Sigmoid colon (tissue), 7 donors: ENCODE measurements at regions of chr10 and their contacts with region 1.

Region 1: GRCh38 chr10:34739915-34740314 is 75.2 kb downstream of the PARD3 start:
- DNase-seq: peak; percentile 89
- H3K4me3 ChIP-seq: peak overlapping the region; percentile 4 to 23 (median 6)
- H3K27ac ChIP-seq: peak overlapping the region; percentile 69 to 83 (median 82)
- H3K4me1 ChIP-seq: peaks cover 0 to 87% (median 61%) of the 10 kb centered on the region in 4 donors
- H3K27me3 ChIP-seq: no peaks in the 10 kb centered on the region
- CTCF ChIP-seq: no peak
- EP300 ChIP-seq: no peak
- POLR2A ChIP-seq: no peak

Region 2: DNA sequence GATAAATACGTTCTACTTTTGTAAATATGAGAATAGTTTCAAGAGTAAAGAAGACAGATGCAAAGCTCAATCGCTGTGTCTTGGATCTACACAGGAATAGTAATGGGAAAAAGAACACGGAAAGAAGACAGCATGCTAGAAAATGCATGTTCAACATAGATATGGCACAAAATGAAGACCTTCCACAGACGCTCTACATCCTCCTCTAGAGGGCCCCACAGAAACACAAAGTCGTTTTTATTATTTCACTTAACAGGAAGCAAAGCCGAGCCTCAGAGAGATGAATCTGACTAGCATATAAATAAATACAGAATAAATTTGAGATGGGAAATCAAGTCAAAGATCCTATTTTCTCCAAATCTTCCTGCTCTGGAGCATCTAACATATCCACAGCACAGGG is 217.4 kb before region 1 on chr10:
- intact Hi-C with region 1: no loop called
- DNase-seq: no peak
- H3K4me3 ChIP-seq: no peak overlapping the region
- H3K27ac ChIP-seq: no peak overlapping the region
- H3K4me1 ChIP-seq: peaks cover 0 to 14% (median 13%) of the 10 kb centered on the region in 4 donors
- H3K27me3 ChIP-seq: no peaks in the 10 kb centered on the region
- CTCF ChIP-seq: no peak
- EP300 ChIP-seq: no peak
- POLR2A ChIP-seq: no peak

Region 3: DNA sequence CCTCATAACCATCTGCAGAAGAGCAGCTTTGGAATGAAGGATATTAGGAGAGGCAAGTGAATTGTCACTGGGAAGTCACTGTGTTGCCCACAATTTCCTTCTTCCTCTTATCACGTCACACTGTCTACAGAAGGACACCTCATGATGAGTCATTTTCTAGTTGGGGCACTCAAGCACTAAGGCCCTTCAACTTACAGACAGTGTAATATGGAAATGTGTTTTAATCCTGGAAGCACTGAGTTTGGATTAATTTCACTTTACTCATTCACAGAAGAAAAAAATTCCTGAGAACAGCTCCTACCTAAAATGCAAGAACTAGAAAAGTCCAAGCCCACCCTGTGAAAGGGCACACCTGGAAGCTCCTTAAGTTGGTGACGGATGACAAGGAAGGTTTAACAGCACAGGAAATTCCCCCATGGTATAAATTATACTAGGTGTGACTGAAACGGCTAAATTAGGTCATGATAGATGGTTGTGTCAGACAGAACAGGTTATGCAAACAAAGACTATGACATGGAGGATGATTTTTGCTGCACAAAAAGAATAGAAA is 18.6 kb after region 1 on chr10:
- intact Hi-C with region 1: loop called (anchors 2 kb)
- DNase-seq: no peak
- H3K4me3 ChIP-seq: no peak overlapping the region
- H3K27ac ChIP-seq: peak overlapping the region in 3 of 4 donors; percentile 19 to 42 (median 24)
- H3K4me1 ChIP-seq: peaks cover 0 to 70% (median 52%) of the 10 kb centered on the region in 4 donors
- H3K27me3 ChIP-seq: no peaks in the 10 kb centered on the region
- CTCF ChIP-seq: no peak
- EP300 ChIP-seq: no peak
- POLR2A ChIP-seq: no peak

Region 4: DNA sequence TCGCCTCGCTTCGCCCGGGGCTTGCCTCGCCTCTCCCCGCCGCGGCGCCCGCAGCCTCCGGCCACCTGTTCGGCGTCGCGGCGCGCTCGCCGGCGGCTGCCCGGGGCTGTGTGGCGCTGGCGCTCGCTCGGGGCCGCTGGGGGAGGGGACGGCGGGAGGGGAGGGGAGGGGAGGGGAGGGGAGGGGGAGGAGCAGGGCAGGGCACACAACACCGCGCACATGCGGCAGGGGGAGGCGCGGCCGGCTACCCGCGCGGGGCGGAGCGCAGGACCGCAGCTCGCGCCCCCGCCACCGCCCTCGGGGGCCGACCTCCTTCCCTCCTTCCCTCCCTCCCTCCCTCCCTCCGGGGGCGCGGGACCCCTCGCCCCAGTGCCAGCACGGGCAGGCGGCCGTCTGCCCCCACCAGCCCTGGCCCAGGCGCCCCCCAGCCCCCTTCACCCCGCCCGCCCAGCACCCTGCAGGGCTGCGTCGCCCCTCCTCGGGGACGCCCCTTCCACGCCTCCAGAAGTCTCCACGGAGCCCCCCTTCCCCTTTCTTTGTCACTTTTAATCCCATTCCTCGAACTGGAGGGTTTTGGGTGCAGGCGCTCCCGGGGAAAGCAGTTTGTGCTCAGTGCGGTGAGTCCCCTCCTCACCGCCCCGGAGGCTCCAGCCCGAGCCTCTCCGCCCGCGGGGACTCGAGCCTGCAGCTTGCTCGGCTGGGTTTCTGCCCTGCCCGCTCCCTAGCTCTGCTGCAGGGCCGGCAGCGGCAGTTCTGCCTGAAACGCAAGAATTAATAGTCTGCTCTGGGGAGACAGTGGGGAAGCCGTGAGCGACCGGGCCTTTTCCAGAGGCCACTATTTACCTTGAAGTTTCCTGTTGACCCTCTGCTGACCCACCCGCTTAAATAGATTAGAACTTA is 75.5 kb after region 1 on chr10 and contains the start of gene PARD3:
- intact Hi-C with region 1: loop called (anchors 5 kb)
- DNase-seq: peak; percentile 87
- H3K4me3 ChIP-seq: peak within 1 kb of the TSS; percentile 65 to 91 (median 88)
- H3K27ac ChIP-seq: peak within 1 kb of the TSS; percentile 85 to 95 (median 92)
- H3K4me1 ChIP-seq: peaks cover 0 to 46% (median 31%) of the 10 kb centered on the region in 4 donors
- H3K27me3 ChIP-seq: no peaks in the 10 kb centered on the region
- CTCF ChIP-seq: no peak
- EP300 ChIP-seq: no peak
- POLR2A ChIP-seq: no peak
- total RNA-seq, gene PARD3: 75.9 to 96.4 (median 83.7) TPM